Heart left ventricle (tissue), 16 donors: ENCODE measurements at regions of chr19 and their contacts with region 1.

Region 1: DNA sequence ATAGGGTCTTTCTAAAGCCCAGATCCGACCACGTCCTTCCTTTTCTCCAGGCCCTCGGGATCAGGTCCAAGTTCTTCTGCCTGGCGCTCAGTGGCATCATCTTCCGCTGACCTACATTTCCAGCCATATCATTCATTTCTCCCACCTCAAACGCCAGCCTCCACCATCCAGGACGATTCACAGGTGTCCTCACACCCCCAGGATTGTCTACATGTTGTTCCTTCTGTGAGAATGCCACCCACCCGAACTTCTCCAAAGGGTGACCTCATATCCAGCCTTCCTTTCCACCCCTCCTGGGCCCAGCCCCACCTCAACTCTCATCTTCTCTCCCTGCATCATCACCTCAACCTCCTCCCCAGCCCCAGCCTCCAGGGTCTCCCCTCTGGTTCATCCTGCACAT is 4.7 kb upstream of the KLK5 start:
- DNase-seq: no peak
- ATAC-seq: no peak
- H3K4me3 ChIP-seq: no peak overlapping the region
- H3K27ac ChIP-seq: no peak overlapping the region
- H3K4me1 ChIP-seq: no peaks in the 10 kb centered on the region
- H3K27me3 ChIP-seq: peaks cover 0 to 29% (median 0%) of the 10 kb centered on the region in 9 donors
- CTCF ChIP-seq: no peak
- POLR2A ChIP-seq: no peak

Region 2: DNA sequence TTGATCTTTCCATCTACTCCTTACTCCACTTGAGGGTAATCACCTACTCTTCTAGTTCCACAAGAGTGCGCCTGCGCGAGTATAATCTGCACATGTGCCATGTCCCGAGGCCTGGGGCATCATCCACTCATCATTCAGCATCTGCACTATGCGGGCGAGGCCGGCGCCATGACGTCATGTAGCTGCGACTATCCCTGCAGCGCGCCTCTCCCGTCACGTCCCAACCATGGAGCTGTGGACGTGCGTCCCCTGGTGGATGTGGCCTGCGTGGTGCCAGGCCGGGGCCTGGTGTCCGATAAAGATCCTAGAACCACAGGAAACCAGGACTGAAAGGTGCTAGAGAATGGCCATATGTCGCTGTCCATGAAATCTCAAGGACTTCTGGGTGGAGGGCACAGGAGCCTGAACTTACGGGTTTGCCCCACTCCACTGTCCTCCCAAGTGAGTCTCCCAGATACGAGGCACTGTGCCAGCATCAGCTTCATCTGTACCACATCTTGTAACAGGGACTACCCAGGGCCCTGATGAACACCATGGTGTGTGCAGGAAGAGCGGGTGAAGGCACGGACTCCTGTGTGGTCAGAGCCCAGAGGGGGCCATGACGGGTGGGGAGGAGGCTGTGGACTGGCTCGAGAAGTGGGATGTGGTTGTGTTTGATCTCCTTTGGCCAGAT is 87.0 kb before region 1 on chr19:
- intact Hi-C with region 1: no loop called
- DNase-seq: no peak
- ATAC-seq: no peak
- H3K4me3 ChIP-seq: no peak overlapping the region
- H3K27ac ChIP-seq: no peak overlapping the region
- H3K4me1 ChIP-seq: no peaks in the 10 kb centered on the region
- H3K27me3 ChIP-seq: peaks cover 0 to 62% (median 21%) of the 10 kb centered on the region in 9 donors
- CTCF ChIP-seq: no peak
- POLR2A ChIP-seq: no peak

Region 3: DNA sequence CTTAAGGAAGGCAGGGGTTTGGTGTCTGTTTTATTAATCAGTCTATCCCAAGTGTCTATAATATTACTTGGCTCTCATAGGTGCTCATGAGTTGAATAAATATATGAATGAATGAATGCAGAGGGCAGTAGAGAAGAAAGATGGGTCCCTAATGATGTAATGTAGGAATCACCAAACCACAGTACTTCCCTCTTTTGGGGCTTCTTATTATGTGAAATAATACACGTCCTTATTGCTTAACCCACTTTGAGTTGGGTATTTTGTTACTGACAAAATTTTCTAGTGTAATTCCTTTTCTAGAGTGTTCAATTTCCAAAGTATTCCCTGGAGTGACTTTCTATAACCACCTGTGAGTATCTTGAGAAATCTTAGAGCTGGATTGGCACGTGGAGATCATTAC is 18.0 kb before region 1 on chr19:
- intact Hi-C with region 1: loop called in 1 of 10 experiments (anchors 1 kb)
- DNase-seq: no peak
- ATAC-seq: no peak
- H3K4me3 ChIP-seq: no peak overlapping the region
- H3K27ac ChIP-seq: no peak overlapping the region
- H3K4me1 ChIP-seq: no peaks in the 10 kb centered on the region
- H3K27me3 ChIP-seq: peaks cover 0 to 11% (median 3%) of the 10 kb centered on the region in 9 donors
- CTCF ChIP-seq: no peak
- POLR2A ChIP-seq: no peak